ENCODE measurements at regions of chr5 and their contacts with region 1.

Region 1: GRCh38 chr5:91212714-91213092 is 170.4 kb downstream of the ARRDC3 start:
- DNase-seq: no peak
- ATAC-seq: no peak
- H3K4me3 Mint-ChIP-seq: no peak overlapping the region
- H3K27ac Mint-ChIP-seq: no peak overlapping the region
- H3K4me1 Mint-ChIP-seq: no peaks in the 10 kb centered on the region
- H3K27me3 Mint-ChIP-seq: no peaks in the 10 kb centered on the region

Region 2: GRCh38 chr5:91162534-91163381 is 49.9 kb before region 1 on chr5:
- POLR2A ChIA-PET with region 1: interaction called, 10 read pairs
- DNase-seq: peak; percentile 51
- ATAC-seq: peak; percentile 99
- H3K4me3 Mint-ChIP-seq: peak overlapping the region; percentile 43
- H3K27ac Mint-ChIP-seq: peak overlapping the region; percentile 88
- H3K4me1 Mint-ChIP-seq: peaks cover 33% of the 10 kb centered on the region
- H3K27me3 Mint-ChIP-seq: no peaks in the 10 kb centered on the region

Measured in activated naive CD8-positive, alpha-beta T cell treated with anti-CD3 and anti-CD28 coated beads, Interleukin-2, amount 10 ng/mL, durations not matched to agents 7 days and 5 days (primary cell).